ENCODE measurements at regions of chr22 and their contacts with region 1.

Region 1: DNA sequence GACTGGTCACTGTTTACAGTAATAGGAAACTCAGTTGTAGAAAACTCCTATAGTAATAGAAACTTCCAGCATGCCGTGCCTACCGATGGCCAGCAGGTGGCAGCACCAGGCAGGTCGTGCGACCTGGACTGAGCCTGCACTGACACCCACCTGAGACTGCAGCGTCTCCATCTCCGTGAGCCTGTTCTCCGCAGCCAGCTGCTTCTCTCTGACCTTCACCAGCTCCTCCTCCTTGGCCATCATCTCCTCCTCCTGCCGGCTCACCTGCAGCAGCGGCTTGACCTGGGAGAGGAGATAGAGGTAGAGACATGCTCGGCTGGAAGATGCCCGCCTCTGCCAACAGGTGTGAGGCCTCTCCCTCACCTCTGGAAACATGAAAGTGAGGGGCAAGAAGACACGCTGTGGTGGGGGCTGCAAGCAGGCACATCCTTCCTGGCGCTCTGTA is 48.5 kb downstream of the APOL1 start:
- DNase-seq: peak; percentile 71
- H3K4me3 ChIP-seq: no peak overlapping the region
- H3K27ac ChIP-seq: peak overlapping the region; percentile 11; the same call in 1 of the 2 replicates
- H3K4me1 ChIP-seq: no peaks in the 10 kb centered on the region
- H3K27me3 ChIP-seq: no peaks in the 10 kb centered on the region

Region 2: DNA sequence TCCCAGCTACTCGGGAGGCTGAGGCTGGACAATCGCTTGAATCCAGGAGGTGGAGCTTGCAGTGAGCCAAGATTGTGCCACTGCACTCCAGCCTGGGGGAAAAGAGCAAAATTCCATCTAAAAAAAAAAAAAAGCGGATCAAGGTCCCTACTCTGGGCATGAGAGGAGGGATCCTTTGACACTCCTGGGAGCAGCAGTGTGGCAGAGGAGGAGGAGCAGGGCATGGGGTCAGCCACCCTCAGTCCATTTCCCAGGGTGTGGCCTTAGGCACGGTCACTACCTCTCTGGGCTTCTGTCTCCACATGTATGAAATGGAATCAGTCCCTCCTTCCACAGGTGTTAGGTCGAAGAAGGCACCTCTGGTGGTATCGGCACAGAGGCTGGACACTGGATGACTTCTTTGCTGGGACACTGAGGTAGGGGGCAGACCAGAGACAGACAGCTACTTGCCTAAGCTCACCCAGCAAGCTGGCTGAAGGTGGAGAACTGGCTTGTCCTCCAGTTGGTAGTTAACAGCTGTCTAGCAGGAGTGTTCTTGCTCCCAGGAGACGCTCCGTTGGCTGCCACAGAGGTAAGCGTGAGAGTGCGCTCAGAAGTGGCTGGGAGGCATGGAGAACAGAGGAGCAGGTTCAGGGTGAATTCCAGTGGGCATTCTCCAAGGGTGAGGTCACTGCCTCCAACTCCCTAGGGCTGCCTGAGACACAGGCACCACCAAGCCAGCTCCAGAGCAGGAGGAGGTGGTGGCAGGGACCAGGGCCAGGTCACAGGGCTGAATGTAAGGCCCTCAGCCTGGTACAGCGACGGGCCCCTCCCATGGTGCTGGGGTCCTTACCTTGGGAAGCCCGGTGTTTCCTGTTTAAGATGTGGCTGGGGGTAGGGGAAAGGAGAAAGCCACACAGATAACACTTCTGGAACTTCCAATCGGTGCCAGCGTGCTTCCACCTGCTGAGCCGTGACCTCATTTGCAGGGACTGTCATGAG is 160.6 kb after region 1 on chr22:
- in situ Hi-C with region 1: loop called (anchors 10 kb)
- DNase-seq: peak; percentile 79
- H3K4me3 ChIP-seq: no peak overlapping the region
- H3K27ac ChIP-seq: no peak overlapping the region
- H3K4me1 ChIP-seq: peaks cover 24% of the 10 kb centered on the region
- H3K27me3 ChIP-seq: no peaks in the 10 kb centered on the region

Measured in GM23248 (cell line).